Activated naive CD4-positive, alpha-beta T cell treated with anti-CD3 and anti-CD28 coated beads, Interleukin-2, amount 10 ng/mL, durations not matched to agents 7 days and 5 days (primary cell): ENCODE measurements at regions of chr2 and their contacts with region 1.

Region 1: DNA sequence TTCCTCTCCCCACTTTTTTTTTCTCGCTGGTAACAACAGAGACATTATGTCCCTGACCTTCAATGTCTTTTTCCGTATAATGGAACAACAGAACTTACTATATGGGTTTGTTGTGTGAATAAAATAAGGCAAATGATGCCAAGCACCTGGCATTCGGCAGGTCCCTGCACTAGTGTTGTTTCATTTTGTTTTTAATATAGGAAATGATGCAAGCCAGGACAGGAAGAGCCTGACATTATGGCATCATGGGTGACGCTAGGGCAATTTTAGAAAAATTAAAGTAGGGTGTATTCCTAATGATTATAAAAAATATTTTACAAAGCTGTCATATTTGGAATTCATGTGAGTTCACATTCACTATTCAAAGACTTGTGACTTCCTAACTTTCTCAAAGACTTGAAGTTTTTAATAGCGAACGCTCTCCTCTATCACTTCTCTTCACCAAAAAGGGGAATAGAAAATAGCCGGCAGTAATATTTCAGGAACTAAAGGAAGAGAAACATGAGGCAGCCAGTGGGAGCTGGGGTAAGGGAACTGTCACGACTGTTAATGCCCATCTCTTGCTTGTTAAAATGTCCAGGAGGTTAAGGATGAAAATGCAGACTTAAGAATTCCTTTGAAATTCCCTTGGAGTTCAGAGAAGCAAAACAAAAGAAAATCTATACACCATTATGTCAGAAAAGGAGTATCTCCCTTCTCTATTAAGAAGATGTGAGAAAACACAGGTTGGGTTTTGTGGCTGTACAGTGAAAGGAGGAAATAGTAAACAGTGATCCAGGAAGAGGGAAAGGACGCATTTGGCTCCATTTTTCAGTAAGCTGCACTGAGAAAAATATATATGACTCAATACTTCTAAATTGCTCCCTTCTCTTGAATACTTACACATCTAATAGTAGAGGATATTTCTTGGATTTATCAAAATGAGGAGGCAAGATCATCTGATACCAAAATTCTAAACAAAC is 60.2 kb downstream of the DPP4 start:
- DNase-seq: peak; percentile 30
- H3K4me3 Mint-ChIP-seq: peak overlapping the region; percentile 47
- H3K27ac Mint-ChIP-seq: peak overlapping the region; percentile 97
- H3K4me1 Mint-ChIP-seq: peaks cover 83% of the 10 kb centered on the region
- H3K27me3 Mint-ChIP-seq: no peaks in the 10 kb centered on the region

Region 2: DNA sequence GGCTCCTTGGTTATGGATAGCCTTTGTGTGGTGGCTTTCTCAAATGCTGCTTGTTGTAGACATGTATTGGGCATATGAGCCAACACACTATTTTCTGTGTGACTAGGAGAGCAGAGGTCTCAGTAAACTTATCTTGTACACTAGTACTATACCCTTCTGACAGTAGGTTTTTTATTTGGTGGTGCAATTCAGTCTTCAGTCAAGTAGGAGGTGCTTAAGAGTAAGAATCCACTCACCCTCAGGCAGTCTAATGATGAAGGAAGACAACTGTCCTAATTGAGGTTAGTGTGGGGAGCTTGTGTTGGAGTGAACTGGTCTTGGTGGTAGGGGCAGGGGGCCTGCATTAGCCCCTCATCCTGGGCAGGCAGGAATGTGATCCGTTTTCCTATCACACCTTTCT is 225.6 kb before region 1 on chr2:
- CTCF ChIA-PET with region 1: no interaction called
- DNase-seq: no peak
- H3K4me3 Mint-ChIP-seq: no peak overlapping the region
- H3K27ac Mint-ChIP-seq: no peak overlapping the region
- H3K4me1 Mint-ChIP-seq: no peaks in the 10 kb centered on the region
- H3K27me3 Mint-ChIP-seq: peaks cover 5% of the 10 kb centered on the region

Region 3: GRCh38 chr2:161992526-161992925 is 21.3 kb before region 1 on chr2:
- CTCF ChIA-PET with region 1: interaction called, 28 read pairs
- DNase-seq: peak; percentile 78
- H3K4me3 Mint-ChIP-seq: peak overlapping the region; percentile 77
- H3K27ac Mint-ChIP-seq: peak overlapping the region; percentile 97
- H3K4me1 Mint-ChIP-seq: peaks cover 76% of the 10 kb centered on the region
- H3K27me3 Mint-ChIP-seq: no peaks in the 10 kb centered on the region

Region 4: DNA sequence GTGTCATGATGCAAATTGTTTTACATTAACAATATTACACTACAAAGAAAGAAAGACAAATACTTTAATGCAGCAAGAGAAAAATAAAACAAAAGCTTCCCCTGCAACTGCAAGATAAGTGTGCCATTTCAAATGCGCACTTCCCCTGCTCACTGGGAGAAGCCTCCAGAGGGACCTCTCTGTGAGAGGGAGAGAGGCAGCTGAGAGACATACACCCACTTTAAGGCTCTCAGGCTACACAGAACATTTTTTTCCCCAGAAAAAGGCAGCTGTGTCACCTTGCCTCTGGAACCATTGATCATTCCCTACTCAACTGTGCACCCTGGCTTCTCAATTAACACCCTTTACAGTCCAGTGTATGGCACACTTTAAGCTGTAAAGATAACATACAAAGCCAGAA is 14.9 kb before region 1 on chr2:
- CTCF ChIA-PET with region 1: interaction called, 28 read pairs
- DNase-seq: no peak
- H3K4me3 Mint-ChIP-seq: no peak overlapping the region
- H3K27ac Mint-ChIP-seq: peak overlapping the region; percentile 20
- H3K4me1 Mint-ChIP-seq: peaks cover 80% of the 10 kb centered on the region
- H3K27me3 Mint-ChIP-seq: no peaks in the 10 kb centered on the region

Region 5: GRCh38 chr2:162058973-162059668 is 45.3 kb after region 1 on chr2:
- CTCF ChIA-PET with region 1: no interaction called
- DNase-seq: peak; percentile 42
- H3K4me3 Mint-ChIP-seq: peak overlapping the region; percentile 65
- H3K27ac Mint-ChIP-seq: peak overlapping the region; percentile 95
- H3K4me1 Mint-ChIP-seq: peaks cover 88% of the 10 kb centered on the region
- H3K27me3 Mint-ChIP-seq: no peaks in the 10 kb centered on the region